ENCODE measurements at regions of chr6 and their contacts with region 1.

Region 1: GRCh38 chr6:142946181-142946923 is 1.4 kb upstream of the HIVEP2 start:
- DNase-seq: peak; percentile 97 to 100 (median 98)
- H3K4me3 ChIP-seq: peak overlapping the region; percentile 36 to 94 (median 80)
- H3K27ac ChIP-seq: peak overlapping the region; percentile 99 to 100 (median 99)
- H3K4me1 ChIP-seq: peaks cover 10 to 22% of the 10 kb centered on the region in 2 donors
- H3K27me3 ChIP-seq: no peaks in the 10 kb centered on the region
- CTCF ChIP-seq: no peak
- POLR2A ChIP-seq: peak; percentile 88 to 98

Region 2: GRCh38 chr6:142671791-142672190 is 274.6 kb before region 1 on chr6:
- intact Hi-C with region 1: no loop called
- DNase-seq: no peak
- H3K4me3 ChIP-seq: no peak overlapping the region
- H3K27ac ChIP-seq: no peak overlapping the region
- H3K4me1 ChIP-seq: no peaks in the 10 kb centered on the region
- H3K27me3 ChIP-seq: peaks cover 10% of the 10 kb centered on the region
- CTCF ChIP-seq: no peak
- POLR2A ChIP-seq: no peak

Region 3: GRCh38 chr6:142885182-142885867 is 61.0 kb before region 1 on chr6:
- intact Hi-C with region 1: loop called in 1 of 2 experiments (anchors 10 kb)
- DNase-seq: peak; percentile 29 to 66 (median 44)
- H3K4me3 ChIP-seq: peak overlapping the region in 2 of 4 donors; percentile 11 to 52
- H3K27ac ChIP-seq: peak overlapping the region in 2 of 5 donors; percentile 13 to 75
- H3K4me1 ChIP-seq: peaks cover 7 to 38% of the 10 kb centered on the region in 2 donors
- H3K27me3 ChIP-seq: no peaks in the 10 kb centered on the region
- CTCF ChIP-seq: no peak
- POLR2A ChIP-seq: peak in 1 of 2 donors; percentile 36